ENCODE measurements at regions of chr13 and their contacts with region 1.

Region 1: GRCh38 chr13:70829748-70830147 is 721.5 kb upstream of the KLHL1 start:
- DNase-seq: no peak
- H3K4me3 ChIP-seq: no peak overlapping the region
- H3K27ac ChIP-seq: no peak overlapping the region
- H3K4me1 ChIP-seq: no peaks in the 10 kb centered on the region
- H3K27me3 ChIP-seq: no peaks in the 10 kb centered on the region
- CTCF ChIP-seq: no peak
- EP300 ChIP-seq: no peak
- POLR2A ChIP-seq: no peak

Region 2: GRCh38 chr13:69545551-69545950 is 1284.2 kb before region 1 on chr13:
- in situ Hi-C with region 1: no loop called
- intact Hi-C with region 1: no loop called
- DNase-seq: no peak
- H3K4me3 ChIP-seq: no peak overlapping the region
- H3K27ac ChIP-seq: no peak overlapping the region
- H3K4me1 ChIP-seq: peaks cover 0 to 16% (median 5%) of the 10 kb centered on the region in 4 donors
- H3K27me3 ChIP-seq: no peaks in the 10 kb centered on the region
- CTCF ChIP-seq: no peak
- EP300 ChIP-seq: no peak
- POLR2A ChIP-seq: no peak

Region 3: GRCh38 chr13:69751259-69751658 is 1078.5 kb before region 1 on chr13:
- in situ Hi-C with region 1: no loop called
- intact Hi-C with region 1: no loop called
- DNase-seq: no peak
- H3K4me3 ChIP-seq: no peak overlapping the region
- H3K27ac ChIP-seq: no peak overlapping the region
- H3K4me1 ChIP-seq: no peaks in the 10 kb centered on the region
- H3K27me3 ChIP-seq: no peaks in the 10 kb centered on the region
- CTCF ChIP-seq: no peak
- EP300 ChIP-seq: no peak
- POLR2A ChIP-seq: no peak

Region 4: DNA sequence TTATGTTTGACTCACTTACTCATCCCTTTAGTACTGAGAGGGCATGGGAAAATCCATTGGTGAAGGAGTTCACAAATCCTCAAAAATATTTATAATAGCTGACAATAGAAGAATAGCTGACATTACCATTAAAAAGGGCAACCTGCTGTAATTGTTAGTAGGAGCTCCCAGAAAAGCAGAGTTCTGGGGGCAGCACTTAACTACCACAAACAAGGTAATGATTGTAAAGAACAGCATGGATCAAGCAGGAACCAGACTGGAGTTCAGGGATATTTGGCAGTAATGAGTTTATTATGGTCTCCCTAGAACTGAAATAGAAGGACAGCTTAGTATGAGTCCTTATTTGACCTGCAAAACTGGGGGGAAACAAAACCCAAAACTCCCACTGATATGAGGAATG is 435.6 kb before region 1 on chr13:
- in situ Hi-C with region 1: no loop called
- intact Hi-C with region 1: no loop called
- DNase-seq: no peak
- H3K4me3 ChIP-seq: no peak overlapping the region
- H3K27ac ChIP-seq: no peak overlapping the region
- H3K4me1 ChIP-seq: peaks cover 0 to 18% (median 4%) of the 10 kb centered on the region in 4 donors
- H3K27me3 ChIP-seq: no peaks in the 10 kb centered on the region
- CTCF ChIP-seq: no peak
- EP300 ChIP-seq: no peak
- POLR2A ChIP-seq: no peak

Region 5: GRCh38 chr13:70816853-70817252 is 12.9 kb before region 1 on chr13:
- in situ Hi-C with region 1: no loop called
- intact Hi-C with region 1: loop called (anchors 1 kb)
- DNase-seq: no peak
- H3K4me3 ChIP-seq: no peak overlapping the region
- H3K27ac ChIP-seq: no peak overlapping the region
- H3K4me1 ChIP-seq: no peaks in the 10 kb centered on the region
- H3K27me3 ChIP-seq: no peaks in the 10 kb centered on the region
- CTCF ChIP-seq: no peak
- EP300 ChIP-seq: no peak
- POLR2A ChIP-seq: no peak